Cardiac septum (tissue), 1 donor: ENCODE measurements at regions of chr17 and their contacts with region 1.

Region 1: DNA sequence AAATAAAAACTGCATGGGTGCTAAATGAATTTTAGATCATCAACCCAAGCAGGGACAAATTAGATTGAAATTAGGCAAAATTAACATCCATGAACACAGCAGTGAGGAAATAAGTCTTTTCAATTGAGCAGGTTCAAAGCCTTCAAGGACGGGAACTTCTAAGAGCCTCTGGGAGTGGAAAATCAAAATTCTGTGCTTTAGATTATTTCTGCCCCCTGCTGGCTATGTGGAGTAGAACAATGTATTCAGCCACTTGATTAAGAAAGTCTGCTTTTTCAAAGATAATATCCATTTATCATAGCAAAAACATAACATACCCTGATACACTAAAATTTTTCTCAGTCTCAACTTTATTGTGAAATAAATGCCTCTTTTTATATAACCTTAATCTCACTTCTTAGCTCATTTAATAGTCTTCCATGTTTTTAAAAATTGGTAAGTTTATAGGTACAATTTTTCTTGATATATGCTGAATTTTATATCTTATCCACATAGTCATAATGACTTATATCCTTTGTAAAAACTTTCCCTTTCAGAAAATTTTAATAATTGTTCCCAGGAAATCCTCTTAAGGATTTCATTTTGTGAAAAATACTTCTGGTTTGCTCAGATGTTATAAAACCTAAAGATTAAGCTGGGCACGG is 28.1 kb upstream of the NOL11 start:
- DNase-seq: no peak

Region 2: DNA sequence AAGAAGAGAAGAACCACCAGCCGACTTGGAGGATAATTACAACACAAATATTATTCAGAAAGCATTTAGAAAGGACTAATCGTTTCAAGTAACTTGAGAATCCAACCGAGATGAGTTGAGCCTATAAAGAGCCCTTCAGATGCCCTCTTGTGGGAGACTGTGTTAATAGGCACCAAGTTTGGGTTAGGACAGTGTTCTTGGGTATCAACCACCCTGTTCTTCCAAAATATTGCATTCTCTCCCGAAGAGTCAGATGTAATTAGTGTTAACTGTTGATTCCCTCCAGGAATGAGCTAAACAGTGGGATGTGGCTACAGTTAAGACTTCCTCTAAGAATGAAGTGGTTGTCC is 59.7 kb before region 1 on chr17:
- intact Hi-C with region 1: loop called (anchors 2 kb)
- DNase-seq: no peak